OCI-LY7 (cell line): ENCODE measurements at regions of chr9 and their contacts with region 1.

Region 1: GRCh38 chr9:130073373-130073772 is 19.7 kb downstream of the GPR107 start:
- DNase-seq: no peak
- H3K4me3 ChIP-seq: no peak overlapping the region
- H3K27ac ChIP-seq: no peak overlapping the region
- H3K4me1 ChIP-seq: no peaks in the 10 kb centered on the region
- CTCF ChIP-seq: no peak

Region 2: GRCh38 chr9:130060296-130060695 is 13.1 kb before region 1 on chr9:
- CTCF ChIA-PET with region 1: interaction called, 4 read pairs
- POLR2A ChIA-PET with region 1: interaction called, 13 read pairs
- intact Hi-C with region 1: no loop called
- DNase-seq: no peak
- H3K4me3 ChIP-seq: no peak overlapping the region
- H3K27ac ChIP-seq: no peak overlapping the region
- H3K4me1 ChIP-seq: peaks cover 21% of the 10 kb centered on the region
- CTCF ChIP-seq: no peak

Region 3: GRCh38 chr9:130118841-130119518 is 45.6 kb after region 1 on chr9:
- CTCF ChIA-PET with region 1: no interaction called
- POLR2A ChIA-PET with region 1: no interaction called
- intact Hi-C with region 1: no loop called
- DNase-seq: no peak
- H3K4me3 ChIP-seq: no peak overlapping the region
- H3K27ac ChIP-seq: no peak overlapping the region
- H3K4me1 ChIP-seq: peaks cover 26% of the 10 kb centered on the region
- CTCF ChIP-seq: no peak